CD4-positive, alpha-beta memory T cell (primary cell): ENCODE measurements at regions of chr4 and their contacts with region 1.

Region 1: GRCh38 chr4:89307446-89308160 is at the start of gene GPRIN3:
- DNase-seq: peak; percentile 65 to 83 (median 68)
- H3K4me3 ChIP-seq: peak within 1 kb of the TSS; percentile 85 to 100
- H3K4me3 Mint-ChIP-seq: peak within 1 kb of the TSS; percentile 95 to 100 (median 99)
- H3K27ac ChIP-seq: peak within 1 kb of the TSS; percentile 87
- H3K27ac Mint-ChIP-seq: peak within 1 kb of the TSS; percentile 87 to 99 (median 98)
- H3K4me1 ChIP-seq: peaks cover 52% of the 10 kb centered on the region
- H3K4me1 Mint-ChIP-seq: peaks cover 34 to 74% (median 48%) of the 10 kb centered on the region in 4 donors
- H3K27me3 ChIP-seq: no peaks in the 10 kb centered on the region
- H3K27me3 Mint-ChIP-seq: no peaks in the 10 kb centered on the region
- total RNA-seq, gene GPRIN3: 32.5 TPM

Region 2: GRCh38 chr4:88591787-88592599 is 715.6 kb before region 1 on chr4 and contains the start of gene HERC3:
- CTCF ChIA-PET with region 1: no interaction called
- POLR2A ChIA-PET with region 1: no interaction called
- intact Hi-C with region 1: loop called (anchors 10 kb)
- DNase-seq: peak; percentile 87 to 91 (median 90)
- H3K4me3 ChIP-seq: peak within 1 kb of the TSS; percentile 33 to 74
- H3K4me3 Mint-ChIP-seq: peak within 1 kb of the TSS; percentile 95 to 99 (median 98)
- H3K27ac ChIP-seq: peak within 1 kb of the TSS; percentile 89
- H3K27ac Mint-ChIP-seq: peak within 1 kb of the TSS; percentile 96 to 99 (median 99)
- H3K4me1 ChIP-seq: peaks cover 32% of the 10 kb centered on the region
- H3K4me1 Mint-ChIP-seq: peaks cover 29 to 54% (median 37%) of the 10 kb centered on the region in 4 donors
- H3K27me3 ChIP-seq: no peaks in the 10 kb centered on the region
- H3K27me3 Mint-ChIP-seq: no peaks in the 10 kb centered on the region
- total RNA-seq, gene HERC3: 95.5 to 97.1 TPM

Region 3: DNA sequence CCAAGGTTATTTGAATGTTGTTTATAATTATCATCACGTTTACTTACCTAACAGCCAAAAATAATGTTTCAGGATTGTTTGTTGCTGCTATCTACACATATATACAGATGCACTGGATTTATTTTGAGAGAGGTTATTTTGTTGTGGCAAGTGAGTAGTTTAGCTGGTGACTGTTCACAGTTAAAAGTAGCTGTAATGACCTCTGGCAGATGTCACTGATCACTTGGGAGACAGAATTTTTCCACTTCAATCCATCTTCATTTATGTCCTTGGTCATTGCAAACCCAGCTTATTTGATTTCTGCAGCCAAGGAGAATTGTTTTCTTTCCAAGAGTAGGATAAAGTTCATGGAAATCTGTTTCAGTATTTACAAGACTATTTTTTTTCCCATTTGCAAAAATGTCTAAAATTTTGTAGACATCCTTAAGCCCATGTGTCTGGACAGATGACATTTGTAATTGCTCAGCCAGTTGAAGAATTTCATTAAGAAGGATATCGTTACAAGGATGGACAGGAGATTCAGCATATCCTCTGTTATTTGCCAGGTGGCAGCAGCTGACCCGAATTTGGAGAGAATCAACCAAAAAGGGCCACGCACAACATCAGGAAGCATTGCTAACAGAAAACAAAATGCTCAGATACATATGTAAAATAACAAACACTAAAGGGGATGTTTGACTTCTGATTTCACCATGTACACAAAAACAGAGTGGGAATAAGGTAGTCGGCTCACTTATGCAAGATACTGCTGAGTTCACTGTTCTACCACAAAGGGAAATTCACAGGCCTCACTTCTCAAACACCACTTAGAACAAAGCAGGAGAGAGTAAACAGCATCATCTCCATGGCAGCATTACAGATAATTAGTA is 64.5 kb before region 1 on chr4:
- CTCF ChIA-PET with region 1: interaction called, 285 read pairs
- POLR2A ChIA-PET with region 1: interaction called, 11 read pairs
- intact Hi-C with region 1: no loop called
- DNase-seq: peak; percentile 55 to 81 (median 70)
- H3K4me3 ChIP-seq: no peak overlapping the region
- H3K4me3 Mint-ChIP-seq: peak overlapping the region in 6 of 8 donors; percentile 7 to 51 (median 18)
- H3K27ac ChIP-seq: peak overlapping the region; percentile 68
- H3K27ac Mint-ChIP-seq: peak overlapping the region; percentile 78 to 98 (median 93)
- H3K4me1 ChIP-seq: peaks cover 60% of the 10 kb centered on the region
- H3K4me1 Mint-ChIP-seq: peaks cover 46 to 74% (median 59%) of the 10 kb centered on the region in 4 donors
- H3K27me3 ChIP-seq: no peaks in the 10 kb centered on the region
- H3K27me3 Mint-ChIP-seq: no peaks in the 10 kb centered on the region

Region 4: GRCh38 chr4:89254847-89255246 is 52.8 kb before region 1 on chr4:
- CTCF ChIA-PET with region 1: interaction called, 285 read pairs
- POLR2A ChIA-PET with region 1: interaction called, 176 read pairs
- intact Hi-C with region 1: loop called (anchors 1 kb)
- DNase-seq: peak; percentile 46 to 61 (median 55)
- H3K4me3 ChIP-seq: no peak overlapping the region
- H3K4me3 Mint-ChIP-seq: peak overlapping the region in 4 of 8 donors; percentile 4 to 45 (median 11)
- H3K27ac ChIP-seq: peak overlapping the region; percentile 45
- H3K27ac Mint-ChIP-seq: peak overlapping the region; percentile 72 to 93 (median 86)
- H3K4me1 ChIP-seq: peaks cover 83% of the 10 kb centered on the region
- H3K4me1 Mint-ChIP-seq: peaks cover 73 to 99% (median 86%) of the 10 kb centered on the region in 4 donors
- H3K27me3 ChIP-seq: no peaks in the 10 kb centered on the region
- H3K27me3 Mint-ChIP-seq: no peaks in the 10 kb centered on the region

Region 5: GRCh38 chr4:89288430-89288829 is 19.2 kb before region 1 on chr4:
- CTCF ChIA-PET with region 1: interaction called, 64 read pairs
- POLR2A ChIA-PET with region 1: interaction called, 453 read pairs
- intact Hi-C with region 1: loop called (anchors 1 kb)
- DNase-seq: no peak
- H3K4me3 ChIP-seq: peak overlapping the region in 1 of 2 donors; percentile 31
- H3K4me3 Mint-ChIP-seq: peak overlapping the region; percentile 72 to 92 (median 83)
- H3K27ac ChIP-seq: peak overlapping the region; percentile 67
- H3K27ac Mint-ChIP-seq: peak overlapping the region in 6 of 7 donors; percentile 96 to 97 (median 96)
- H3K4me1 ChIP-seq: peaks cover 97% of the 10 kb centered on the region
- H3K4me1 Mint-ChIP-seq: peaks cover 80 to 83% (median 81%) of the 10 kb centered on the region in 4 donors
- H3K27me3 ChIP-seq: no peaks in the 10 kb centered on the region
- H3K27me3 Mint-ChIP-seq: no peaks in the 10 kb centered on the region

Region 6: GRCh38 chr4:89344571-89344970 is 37.0 kb after region 1 on chr4:
- CTCF ChIA-PET with region 1: no interaction called
- POLR2A ChIA-PET with region 1: no interaction called
- intact Hi-C with region 1: no loop called
- DNase-seq: no peak
- H3K4me3 ChIP-seq: no peak overlapping the region
- H3K4me3 Mint-ChIP-seq: no peak overlapping the region
- H3K27ac ChIP-seq: no peak overlapping the region
- H3K27ac Mint-ChIP-seq: no peak overlapping the region
- H3K4me1 ChIP-seq: no peaks in the 10 kb centered on the region
- H3K4me1 Mint-ChIP-seq: peaks cover 0 to 2% (median under 1%) of the 10 kb centered on the region in 4 donors
- H3K27me3 ChIP-seq: no peaks in the 10 kb centered on the region
- H3K27me3 Mint-ChIP-seq: no peaks in the 10 kb centered on the region

Region 7: GRCh38 chr4:89434364-89434988 is 126.9 kb after region 1 on chr4:
- CTCF ChIA-PET with region 1: interaction called, 3 read pairs
- POLR2A ChIA-PET with region 1: interaction called, 3 read pairs
- intact Hi-C with region 1: loop called (anchors 1 kb)
- DNase-seq: peak in 4 of 5 donors; percentile 48 to 58 (median 55)
- H3K4me3 ChIP-seq: no peak overlapping the region
- H3K4me3 Mint-ChIP-seq: no peak overlapping the region
- H3K27ac ChIP-seq: no peak overlapping the region
- H3K27ac Mint-ChIP-seq: no peak overlapping the region
- H3K4me1 ChIP-seq: peaks cover 16% of the 10 kb centered on the region
- H3K4me1 Mint-ChIP-seq: peaks cover 13 to 16% (median 14%) of the 10 kb centered on the region in 4 donors
- H3K27me3 ChIP-seq: no peaks in the 10 kb centered on the region
- H3K27me3 Mint-ChIP-seq: peaks cover 0 to 3% of the 10 kb centered on the region in 2 donors